AG04449 (cell line): ENCODE measurements at regions of chr12 and their contacts with region 1.

Region 1: DNA sequence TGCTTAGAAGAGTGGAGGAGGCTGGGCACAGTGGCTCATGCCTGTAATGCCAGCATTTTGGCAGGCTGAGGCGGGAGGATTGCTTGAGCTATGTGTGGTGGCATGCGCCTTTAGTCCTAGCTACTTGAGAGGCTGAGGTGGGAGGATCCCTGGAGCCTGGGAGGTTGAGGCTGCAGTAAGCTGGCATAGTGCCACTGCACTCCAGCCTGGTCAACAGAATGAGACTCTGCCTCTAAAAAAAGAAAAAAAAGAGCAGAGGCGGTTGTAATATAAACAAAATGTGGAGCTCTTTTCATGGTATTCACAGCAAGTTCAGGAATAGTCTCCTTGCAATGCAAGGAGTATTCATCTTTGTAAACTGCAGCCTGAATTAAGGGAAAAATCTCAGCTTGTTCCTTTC is 27.2 kb downstream of the ARID2 start:
- DNase-seq: no peak
- H3K4me3 ChIP-seq: no peak overlapping the region
- CTCF ChIP-seq: no peak

Region 2: GRCh38 chr12:44921736-44922135 is 834.9 kb before region 1 on chr12:
- CTCF ChIA-PET with region 1: no interaction called
- POLR2A ChIA-PET with region 1: no interaction called
- DNase-seq: no peak
- H3K4me3 ChIP-seq: no peak overlapping the region
- CTCF ChIP-seq: no peak

Region 3: DNA sequence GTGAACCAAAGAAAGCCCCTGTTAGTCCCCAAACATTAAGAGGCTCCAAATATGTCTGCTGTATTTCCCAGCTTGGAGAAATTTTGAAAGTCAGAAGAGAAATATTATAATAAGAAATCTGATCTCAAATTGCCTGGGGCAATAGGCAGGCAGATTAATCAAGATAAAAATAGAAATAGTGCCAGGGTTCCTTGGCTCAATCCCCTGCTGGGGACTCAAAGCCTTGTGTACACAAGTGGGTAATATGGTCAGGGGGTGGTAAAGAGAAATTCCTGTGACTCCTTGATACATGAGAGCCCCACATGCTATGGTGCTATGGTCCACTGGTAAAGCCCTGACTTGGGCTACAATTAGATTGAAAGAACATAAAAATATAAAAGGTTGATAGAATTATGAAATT is 68.5 kb before region 1 on chr12:
- CTCF ChIA-PET with region 1: no interaction called
- POLR2A ChIA-PET with region 1: no interaction called
- DNase-seq: no peak
- H3K4me3 ChIP-seq: no peak overlapping the region
- CTCF ChIP-seq: no peak

Region 4: DNA sequence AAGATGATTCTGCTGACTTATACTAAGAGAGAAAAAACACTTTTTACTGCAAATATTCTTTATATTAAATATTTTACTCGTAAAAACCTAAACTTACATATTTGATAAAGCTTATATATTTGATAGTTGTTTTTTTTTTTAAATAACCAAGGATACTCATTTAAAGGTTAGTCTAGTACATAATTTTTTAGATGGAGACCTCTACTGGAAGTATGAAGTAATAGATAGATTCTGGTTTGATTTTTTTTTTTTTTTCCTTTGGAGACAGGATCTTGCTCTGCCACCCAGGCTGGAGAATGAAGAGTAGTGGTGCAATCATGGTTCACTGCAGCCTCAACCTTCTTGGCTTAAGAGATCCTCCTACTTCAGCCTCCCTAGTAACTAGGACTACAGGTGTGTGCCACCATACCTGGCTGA is 10.8 kb before region 1 on chr12:
- CTCF ChIA-PET with region 1: interaction called, 15 read pairs
- POLR2A ChIA-PET with region 1: no interaction called
- DNase-seq: no peak
- H3K4me3 ChIP-seq: no peak overlapping the region
- CTCF ChIP-seq: peak; percentile 4

Region 5: DNA sequence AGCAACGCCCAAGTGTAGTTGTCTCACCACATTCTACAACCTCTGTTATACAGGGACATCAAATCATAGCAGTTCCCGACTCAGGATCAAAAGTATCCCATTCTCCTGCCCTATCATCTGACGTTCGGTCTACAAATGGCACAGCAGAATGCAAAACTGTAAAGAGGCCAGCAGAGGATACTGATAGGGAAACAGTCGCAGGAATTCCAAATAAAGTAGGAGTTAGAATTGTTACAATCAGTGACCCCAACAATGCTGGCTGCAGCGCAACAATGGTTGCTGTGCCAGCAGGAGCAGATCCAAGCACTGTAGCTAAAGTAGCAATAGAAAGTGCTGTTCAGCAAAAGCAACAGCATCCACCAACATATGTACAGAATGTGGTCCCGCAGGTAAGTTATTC is 95.8 kb after region 1 on chr12:
- CTCF ChIA-PET with region 1: no interaction called
- POLR2A ChIA-PET with region 1: no interaction called
- DNase-seq: no peak
- H3K4me3 ChIP-seq: no peak overlapping the region
- CTCF ChIP-seq: no peak